ENCODE measurements at regions of chr4 and their contacts with region 1.

Region 1: DNA sequence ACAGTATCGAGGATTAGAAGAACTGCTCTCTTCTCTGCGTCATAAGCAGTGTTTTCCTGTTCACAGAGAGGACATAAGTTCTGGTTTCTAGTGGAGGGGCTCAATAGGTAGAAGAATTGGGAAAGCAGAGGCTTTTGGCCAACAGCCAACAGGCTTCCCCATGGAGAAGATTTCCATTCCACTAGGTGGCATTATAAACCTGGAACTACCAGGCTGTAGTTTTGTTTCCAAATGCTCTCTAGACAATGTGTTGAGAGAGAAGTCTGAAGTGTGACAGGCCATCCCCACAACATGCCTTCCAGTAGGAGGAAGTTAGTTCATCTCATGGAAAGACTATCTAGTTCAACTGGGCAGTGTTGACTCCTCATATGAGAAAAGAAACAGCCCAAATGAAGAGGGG is 63.8 kb upstream of the ANXA10 start:
- DNase-seq: peak; percentile 11
- ATAC-seq: no peak
- H3K4me3 ChIP-seq: no peak overlapping the region
- H3K27ac ChIP-seq: no peak overlapping the region
- H3K4me1 ChIP-seq: no peaks in the 10 kb centered on the region
- H3K27me3 ChIP-seq: no peaks in the 10 kb centered on the region
- CTCF ChIP-seq: peak; percentile 24; the same call in 1 of the 2 replicates
- POLR2A ChIP-seq: no peak
- RAD21 ChIP-seq: peak; percentile 30; the same call in 1 of the 2 replicates

Region 2: DNA sequence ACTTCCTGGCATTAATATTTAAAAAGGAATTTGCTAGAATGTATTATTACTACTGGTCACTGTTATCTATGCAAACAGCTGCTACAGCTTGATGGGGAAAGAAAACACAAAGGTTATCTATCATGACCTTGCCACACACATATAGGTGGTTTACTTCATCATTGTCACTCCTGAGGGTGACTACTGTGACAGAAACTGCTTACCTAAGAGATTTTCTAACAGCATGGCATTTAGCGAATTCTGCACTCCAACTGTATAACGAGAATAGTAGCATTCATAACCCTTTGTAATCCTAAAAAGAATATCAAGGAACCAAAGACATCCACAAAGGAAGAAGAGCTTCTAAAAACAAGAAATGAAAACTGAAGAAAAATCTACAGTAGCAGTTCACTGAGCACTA is 719.7 kb before region 1 on chr4:
- CTCF ChIA-PET with region 1: no interaction called
- POLR2A ChIA-PET with region 1: no interaction called
- dilution Hi-C with region 1: no loop called
- in situ Hi-C with region 1: no loop called
- intact Hi-C with region 1: no loop called
- DNase-seq: no peak
- ATAC-seq: no peak
- H3K4me3 ChIP-seq: no peak overlapping the region
- H3K27ac ChIP-seq: no peak overlapping the region
- H3K4me1 ChIP-seq: no peaks in the 10 kb centered on the region
- H3K27me3 ChIP-seq: no peaks in the 10 kb centered on the region
- CTCF ChIP-seq: no peak
- POLR2A ChIP-seq: no peak
- RAD21 ChIP-seq: no peak

Region 3: GRCh38 chr4:167745024-167745687 is 283.4 kb before region 1 on chr4:
- CTCF ChIA-PET with region 1: interaction called, 11 read pairs
- POLR2A ChIA-PET with region 1: no interaction called
- dilution Hi-C with region 1: no loop called
- in situ Hi-C with region 1: no loop called
- intact Hi-C with region 1: no loop called
- DNase-seq: no peak
- ATAC-seq: no peak
- H3K4me3 ChIP-seq: no peak overlapping the region
- H3K27ac ChIP-seq: no peak overlapping the region
- H3K4me1 ChIP-seq: no peaks in the 10 kb centered on the region
- H3K27me3 ChIP-seq: no peaks in the 10 kb centered on the region
- CTCF ChIP-seq: no peak
- POLR2A ChIP-seq: no peak
- RAD21 ChIP-seq: no peak

Measured in IMR-90 (cell line).